Panc1 (cell line): ENCODE measurements at regions of chr3 and their contacts with region 1.

Region 1: DNA sequence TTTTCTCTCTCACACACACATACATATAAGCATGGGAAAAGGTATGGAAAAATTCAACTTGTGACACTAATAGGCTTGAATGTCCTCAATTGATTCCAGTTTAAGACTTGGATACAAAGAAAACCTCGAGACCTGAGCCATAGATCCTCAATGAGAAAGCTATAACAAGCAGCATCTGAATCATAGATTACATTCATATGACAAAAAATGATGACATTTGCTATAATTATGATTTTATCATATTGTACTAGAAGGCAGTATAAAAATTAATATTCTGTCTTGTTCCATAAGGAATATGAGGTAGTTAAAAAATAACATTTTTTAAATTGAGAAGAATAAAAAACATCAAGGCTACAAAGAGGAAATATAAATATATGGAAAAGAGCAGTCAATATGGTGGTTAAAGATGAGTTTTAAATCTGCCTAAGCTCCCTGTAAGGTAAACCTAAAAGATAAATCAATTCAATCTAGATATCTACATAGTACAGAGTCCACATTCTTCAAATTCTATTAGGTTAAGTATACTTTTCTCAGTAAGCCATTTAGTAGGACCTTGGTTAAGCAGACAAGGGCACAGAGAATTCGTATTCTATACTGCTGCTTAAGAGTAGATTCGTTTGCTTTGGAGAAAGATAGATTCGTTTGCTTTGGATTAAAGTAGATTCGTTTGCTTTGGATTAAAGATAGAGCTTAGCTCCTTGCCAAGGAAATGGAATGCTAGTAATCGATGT is 175.7 kb downstream of the STAG1 start:
- DNase-seq: no peak
- ATAC-seq: no peak
- H3K4me3 ChIP-seq: no peak overlapping the region
- H3K27ac ChIP-seq: no peak overlapping the region
- H3K4me1 ChIP-seq: no peaks in the 10 kb centered on the region
- H3K27me3 ChIP-seq: no peaks in the 10 kb centered on the region
- CTCF ChIP-seq: no peak

Region 2: GRCh38 chr3:136535906-136536305 is 40.5 kb before region 1 on chr3:
- CTCF ChIA-PET with region 1: no interaction called
- POLR2A ChIA-PET with region 1: interaction called, 15 read pairs
- in situ Hi-C with region 1: no loop called
- intact Hi-C with region 1: no loop called
- DNase-seq: no peak
- ATAC-seq: 0 out of 2 replicates have a peak, but pooled peaks have one; percentile 51
- H3K4me3 ChIP-seq: no peak overlapping the region
- H3K27ac ChIP-seq: no peak overlapping the region
- H3K4me1 ChIP-seq: no peaks in the 10 kb centered on the region; the same call in 1 of the 2 replicates
- H3K27me3 ChIP-seq: no peaks in the 10 kb centered on the region
- CTCF ChIP-seq: no peak

Region 3: GRCh38 chr3:136708333-136708985 is 132.0 kb after region 1 on chr3:
- CTCF ChIA-PET with region 1: no interaction called
- POLR2A ChIA-PET with region 1: no interaction called
- in situ Hi-C with region 1: no loop called
- intact Hi-C with region 1: no loop called
- DNase-seq: no peak
- ATAC-seq: no peak
- H3K4me3 ChIP-seq: no peak overlapping the region
- H3K27ac ChIP-seq: no peak overlapping the region
- H3K4me1 ChIP-seq: peaks cover 4% of the 10 kb centered on the region; the same call in 1 of the 2 replicates
- H3K27me3 ChIP-seq: no peaks in the 10 kb centered on the region
- CTCF ChIP-seq: no peak

Region 4: GRCh38 chr3:136979684-136980083 is 403.2 kb after region 1 on chr3:
- CTCF ChIA-PET with region 1: no interaction called
- POLR2A ChIA-PET with region 1: no interaction called
- in situ Hi-C with region 1: no loop called
- intact Hi-C with region 1: no loop called
- DNase-seq: no peak
- ATAC-seq: no peak
- H3K4me3 ChIP-seq: no peak overlapping the region
- H3K27ac ChIP-seq: no peak overlapping the region
- H3K4me1 ChIP-seq: no peaks in the 10 kb centered on the region
- H3K27me3 ChIP-seq: no peaks in the 10 kb centered on the region
- CTCF ChIP-seq: no peak